Lower lobe of right lung (tissue), 2 donors: ENCODE measurements at regions of chr7 and their contacts with region 1.

Region 1: DNA sequence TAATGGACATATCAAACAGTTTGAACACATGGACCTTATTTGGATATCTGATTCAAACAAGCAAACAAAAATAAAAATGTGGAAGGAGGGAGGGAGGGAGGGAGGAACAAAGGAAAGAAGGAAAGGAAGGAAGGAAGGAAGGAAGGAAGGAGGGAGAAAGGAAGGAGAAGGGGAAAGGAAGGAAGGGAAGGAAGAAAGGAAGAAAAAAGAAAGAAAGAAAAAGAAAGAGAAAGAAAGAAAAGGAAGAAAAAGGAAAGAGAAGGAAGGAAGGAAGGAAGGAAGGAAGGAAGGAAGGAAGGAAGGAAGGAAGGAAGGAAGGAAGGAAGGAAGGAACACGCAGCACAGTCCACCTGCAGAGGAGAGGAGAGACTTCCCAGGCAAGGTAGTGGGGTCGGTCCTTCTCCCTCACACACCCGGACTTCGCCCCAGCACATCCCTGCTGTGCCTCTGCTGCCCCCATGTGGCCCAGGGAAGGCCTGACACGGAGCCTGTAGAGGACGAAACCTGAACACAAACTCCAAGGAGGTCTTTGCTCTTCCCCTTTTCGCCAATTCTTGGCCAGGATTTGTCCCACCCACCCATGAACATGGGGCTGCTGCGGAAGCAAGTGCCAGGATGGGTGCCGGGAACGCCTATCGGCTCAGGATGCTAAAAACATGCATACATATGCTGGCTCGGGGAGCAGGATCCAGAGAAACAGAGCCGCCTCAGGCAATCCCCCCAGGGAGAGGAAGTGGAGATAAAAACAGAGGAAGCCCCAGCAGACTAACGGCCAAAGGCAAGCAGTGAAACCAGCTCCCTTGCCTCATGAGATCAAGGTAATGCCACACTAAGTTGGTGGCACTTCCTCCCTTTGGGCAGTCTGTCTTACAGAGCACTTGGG is 52.3 kb upstream of the DGKI start:
- DNase-seq: peak; percentile 82
- ATAC-seq: peak; percentile 93
- H3K4me3 ChIP-seq: no peak overlapping the region
- H3K27ac ChIP-seq: peak overlapping the region; percentile 43
- H3K4me1 ChIP-seq: peaks cover 16% of the 10 kb centered on the region
- H3K27me3 ChIP-seq: no peaks in the 10 kb centered on the region
- CTCF ChIP-seq: peak; percentile 88

Region 2: DNA sequence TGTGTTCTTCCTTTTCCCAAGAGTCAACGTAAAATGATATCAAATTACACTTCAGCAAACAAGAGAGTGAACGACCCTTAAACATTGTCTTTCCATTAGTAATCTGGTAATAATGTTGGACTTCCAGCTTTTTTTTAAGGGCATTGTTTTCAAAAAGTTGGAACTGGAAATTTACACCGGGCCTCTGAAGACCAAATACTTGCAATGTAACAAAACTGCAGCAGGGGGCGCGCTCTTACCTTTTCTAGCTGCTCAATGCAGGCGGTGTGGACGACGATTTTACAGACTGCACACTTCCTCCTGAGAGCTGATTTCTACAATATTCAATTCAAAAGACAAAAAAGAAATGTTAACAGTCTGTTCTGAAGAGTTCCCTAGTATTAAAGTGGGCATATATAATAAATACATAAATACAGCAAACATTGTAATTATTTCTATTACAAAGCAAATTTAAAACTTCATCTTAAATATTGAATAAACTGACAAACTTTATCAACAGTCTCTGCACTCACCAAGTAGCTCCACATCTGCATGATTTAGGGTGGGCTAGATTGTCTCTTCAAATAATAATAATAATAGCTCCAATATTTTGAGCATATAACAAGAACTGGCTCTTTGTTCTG is 242.7 kb before region 1 on chr7:
- intact Hi-C with region 1: loop called (anchors 5 kb)
- DNase-seq: peak; percentile 78
- ATAC-seq: peak; percentile 78 to 80
- H3K4me3 ChIP-seq: no peak overlapping the region
- H3K27ac ChIP-seq: no peak overlapping the region
- H3K4me1 ChIP-seq: peaks cover 12% of the 10 kb centered on the region
- H3K27me3 ChIP-seq: no peaks in the 10 kb centered on the region
- CTCF ChIP-seq: peak; percentile 77

Region 3: GRCh38 chr7:138008547-138009349 is 109.7 kb after region 1 on chr7:
- intact Hi-C with region 1: loop called (anchors 5 kb)
- DNase-seq: no peak
- ATAC-seq: peak; percentile 78 to 79
- H3K4me3 ChIP-seq: no peak overlapping the region
- H3K27ac ChIP-seq: no peak overlapping the region
- H3K4me1 ChIP-seq: peaks cover 6% of the 10 kb centered on the region
- H3K27me3 ChIP-seq: no peaks in the 10 kb centered on the region
- CTCF ChIP-seq: peak; percentile 92